BJ (cell line): ENCODE measurements at regions of chr5 and their contacts with region 1.

Region 1: GRCh38 chr5:15585841-15586591 is 86.0 kb downstream of the FBXL7 start:
- DNase-seq: peak; percentile 79
- H3K4me3 ChIP-seq: no peak overlapping the region
- H3K27me3 ChIP-seq: no peaks in the 10 kb centered on the region
- CTCF ChIP-seq: no peak

Region 2: DNA sequence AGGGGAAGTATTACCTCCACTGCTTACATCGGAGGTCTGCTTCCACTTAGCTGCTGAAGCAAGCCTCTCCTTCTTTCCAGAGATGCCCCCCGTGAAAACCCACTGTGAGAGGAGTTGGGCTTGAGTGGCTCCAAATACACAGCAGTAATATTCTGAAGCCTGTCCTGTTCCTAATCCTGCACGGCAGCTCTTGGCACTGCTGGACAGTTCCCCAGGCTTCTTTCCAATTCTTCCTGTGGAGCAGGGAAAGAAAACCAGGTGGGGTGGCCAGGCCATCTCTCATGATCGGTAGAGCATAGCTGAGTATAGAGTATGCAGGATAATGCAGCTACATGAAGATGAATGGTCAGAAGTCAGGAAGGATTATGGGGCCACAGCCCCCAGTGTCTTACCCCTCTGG is 258.2 kb after region 1 on chr5:
- CTCF ChIA-PET with region 1: no interaction called
- POLR2A ChIA-PET with region 1: interaction called, 12 read pairs
- DNase-seq: no peak
- H3K4me3 ChIP-seq: no peak overlapping the region
- H3K27me3 ChIP-seq: no peaks in the 10 kb centered on the region
- CTCF ChIP-seq: no peak